Mammary epithelial cell (primary cell): ENCODE measurements at regions of chr6 and their contacts with region 1.

Region 1: DNA sequence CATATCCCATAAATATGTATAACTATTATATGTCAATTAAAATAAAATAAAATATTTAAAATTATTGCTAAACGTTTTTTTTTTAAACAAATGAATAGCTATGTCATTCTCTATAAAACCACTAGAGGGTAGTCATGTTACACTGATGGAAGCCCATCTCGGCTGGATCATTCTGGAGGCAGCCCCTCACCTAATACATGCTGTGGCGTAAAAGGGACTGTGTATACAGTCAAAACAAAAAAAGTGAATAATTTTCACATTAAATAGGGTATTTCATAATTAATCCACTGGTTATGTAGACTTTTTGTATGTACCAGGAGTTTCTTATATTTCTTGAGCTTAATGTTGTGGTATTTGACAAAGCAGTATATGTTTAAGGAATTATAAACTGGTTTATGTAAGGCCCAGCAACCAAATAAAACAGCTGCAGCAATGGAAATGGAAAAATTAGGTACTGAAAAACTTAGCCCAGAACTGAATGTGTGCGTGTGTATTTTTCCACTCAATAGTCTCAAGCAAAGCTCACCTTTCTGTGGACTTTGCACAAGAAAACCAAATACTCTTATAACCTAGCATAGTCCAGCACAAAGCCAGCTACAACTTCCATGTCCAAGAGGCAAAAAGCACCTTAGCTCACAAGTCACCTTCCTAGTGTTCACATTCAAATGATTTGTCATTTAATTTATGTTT is 81.7 kb downstream of the COL9A1 start:
- DNase-seq: no peak
- H3K4me3 ChIP-seq: no peak overlapping the region
- H3K27ac ChIP-seq: no peak overlapping the region
- H3K4me1 ChIP-seq: no peaks in the 10 kb centered on the region
- H3K27me3 ChIP-seq: peaks cover 17% of the 10 kb centered on the region
- CTCF ChIP-seq: peak; percentile 57 to 64

Region 2: DNA sequence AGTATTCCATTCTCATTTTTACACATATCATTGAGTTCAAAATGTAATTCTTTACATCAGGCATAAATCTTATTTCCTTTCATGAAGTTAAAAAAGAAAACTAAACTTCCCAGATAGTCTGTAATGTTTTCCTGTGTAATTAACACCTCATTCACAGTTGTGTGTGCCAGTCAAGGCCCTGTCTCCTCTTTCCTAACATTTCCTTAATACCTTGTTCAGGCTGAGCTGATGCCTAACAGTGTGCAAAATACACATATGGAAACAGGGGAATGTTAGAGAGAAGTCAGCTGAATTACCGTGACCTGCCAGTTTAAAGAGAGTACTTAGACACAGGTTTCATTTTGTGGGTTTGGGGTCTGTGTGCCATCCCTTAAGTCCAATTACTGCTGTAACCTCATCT is 127.0 kb before region 1 on chr6:
- CTCF ChIA-PET with region 1: no interaction called
- dilution Hi-C with region 1: no loop called
- in situ Hi-C with region 1: no loop called
- intact Hi-C with region 1: no loop called
- DNase-seq: no peak
- H3K4me3 ChIP-seq: no peak overlapping the region
- H3K27ac ChIP-seq: no peak overlapping the region
- H3K4me1 ChIP-seq: no peaks in the 10 kb centered on the region
- H3K27me3 ChIP-seq: no peaks in the 10 kb centered on the region
- CTCF ChIP-seq: no peak

Region 3: GRCh38 chr6:70253923-70254322 is 32.8 kb after region 1 on chr6:
- CTCF ChIA-PET with region 1: no interaction called
- dilution Hi-C with region 1: no loop called
- in situ Hi-C with region 1: no loop called
- intact Hi-C with region 1: no loop called
- DNase-seq: no peak
- H3K4me3 ChIP-seq: no peak overlapping the region
- H3K27ac ChIP-seq: no peak overlapping the region
- H3K4me1 ChIP-seq: no peaks in the 10 kb centered on the region
- H3K27me3 ChIP-seq: peaks cover 3% of the 10 kb centered on the region
- CTCF ChIP-seq: no peak

Region 4: GRCh38 chr6:70292193-70292592 is 71.0 kb after region 1 on chr6:
- CTCF ChIA-PET with region 1: no interaction called
- dilution Hi-C with region 1: no loop called
- in situ Hi-C with region 1: no loop called
- intact Hi-C with region 1: loop called (anchors 5 kb)
- DNase-seq: no peak
- H3K4me3 ChIP-seq: no peak overlapping the region
- H3K27ac ChIP-seq: no peak overlapping the region
- H3K4me1 ChIP-seq: no peaks in the 10 kb centered on the region
- H3K27me3 ChIP-seq: peaks cover 38% of the 10 kb centered on the region
- CTCF ChIP-seq: no peak

Region 5: GRCh38 chr6:70531133-70531532 is 310.0 kb after region 1 on chr6:
- CTCF ChIA-PET with region 1: no interaction called
- dilution Hi-C with region 1: no loop called
- in situ Hi-C with region 1: no loop called
- intact Hi-C with region 1: no loop called
- DNase-seq: no peak
- H3K4me3 ChIP-seq: no peak overlapping the region
- H3K27ac ChIP-seq: no peak overlapping the region
- H3K4me1 ChIP-seq: no peaks in the 10 kb centered on the region
- H3K27me3 ChIP-seq: no peaks in the 10 kb centered on the region
- CTCF ChIP-seq: no peak

Region 6: DNA sequence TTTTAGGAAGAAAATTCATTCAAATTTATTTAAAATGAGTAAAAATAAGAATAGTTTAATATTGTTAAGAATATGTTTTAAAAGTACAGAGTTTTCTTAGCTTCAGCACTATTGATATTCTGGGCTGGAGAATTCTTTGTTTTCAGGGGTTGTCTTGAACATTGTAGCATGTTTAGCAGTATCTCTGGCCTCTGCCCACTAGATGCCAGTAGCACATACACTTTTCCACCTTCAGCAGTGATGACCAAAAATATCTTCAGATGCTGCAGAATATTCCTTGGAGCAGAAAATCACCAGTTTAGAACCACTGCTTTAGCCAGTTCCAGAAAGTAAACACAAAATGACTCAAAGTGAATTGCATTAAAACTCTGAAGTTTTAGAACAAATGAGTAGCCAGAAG is 326.1 kb after region 1 on chr6:
- CTCF ChIA-PET with region 1: no interaction called
- dilution Hi-C with region 1: no loop called
- in situ Hi-C with region 1: no loop called
- intact Hi-C with region 1: no loop called
- DNase-seq: no peak
- H3K4me3 ChIP-seq: no peak overlapping the region
- H3K27ac ChIP-seq: no peak overlapping the region
- H3K4me1 ChIP-seq: no peaks in the 10 kb centered on the region
- H3K27me3 ChIP-seq: no peaks in the 10 kb centered on the region
- CTCF ChIP-seq: peak; percentile 23 to 50

Region 7: GRCh38 chr6:70955441-70956190 is 734.4 kb after region 1 on chr6:
- CTCF ChIA-PET with region 1: interaction called, 12 read pairs
- dilution Hi-C with region 1: no loop called
- in situ Hi-C with region 1: no loop called
- intact Hi-C with region 1: loop called (anchors 2 kb)
- DNase-seq: peak; percentile 66
- H3K4me3 ChIP-seq: peak overlapping the region; percentile 26 to 46 (median 37)
- H3K27ac ChIP-seq: no peak overlapping the region
- H3K4me1 ChIP-seq: peaks cover 17% of the 10 kb centered on the region
- H3K27me3 ChIP-seq: peaks cover 22% of the 10 kb centered on the region
- CTCF ChIP-seq: peak; percentile 61 to 88